Natural killer cell (primary cell): ENCODE measurements at regions of chr3 and their contacts with region 1.

Region 1: DNA sequence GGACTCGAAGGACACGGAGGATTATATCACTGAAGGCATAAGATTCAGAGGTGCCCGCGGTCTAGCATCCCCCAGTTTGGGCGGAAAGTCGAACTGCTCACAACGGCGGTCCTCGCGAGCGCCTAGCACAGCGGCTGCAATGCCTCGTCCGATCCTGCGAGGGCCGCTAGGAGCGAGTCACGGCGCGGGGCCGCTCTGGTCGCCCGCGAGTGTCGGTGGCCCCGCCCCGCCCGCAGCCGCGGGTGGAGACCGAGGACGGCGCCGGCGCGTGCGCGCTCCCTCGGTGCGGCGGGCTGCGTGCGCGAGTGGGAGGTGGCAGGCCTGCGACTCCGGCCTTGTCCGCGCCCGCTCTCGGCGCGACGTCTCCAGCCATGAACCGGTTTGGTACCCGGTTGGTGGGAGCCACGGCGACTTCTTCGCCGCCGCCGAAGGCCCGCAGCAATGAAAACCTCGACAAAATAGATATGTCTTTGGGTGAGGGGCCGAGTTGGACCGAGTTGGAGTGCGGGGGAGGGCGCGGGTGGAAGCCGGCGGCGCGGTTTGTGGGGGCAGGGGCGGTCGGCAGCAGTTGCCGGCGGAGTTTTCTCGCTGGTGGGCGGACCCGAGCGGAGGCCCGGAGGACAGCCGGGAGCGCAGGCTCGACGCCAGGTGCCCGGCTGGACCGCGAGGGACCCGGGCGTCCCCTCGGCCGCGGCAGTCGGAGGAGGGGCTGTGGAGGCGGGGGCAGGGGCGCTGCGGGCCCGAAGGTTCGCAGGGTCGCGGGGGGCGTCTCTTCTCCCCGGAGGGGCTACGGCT is at the start of gene FYTTD1:
- DNase-seq: peak; percentile 89 to 95
- ATAC-seq: peak; percentile 83 to 93 (median 89)
- H3K4me3 ChIP-seq: peak within 1 kb of the TSS; percentile 86
- H3K4me3 Mint-ChIP-seq: peak within 1 kb of the TSS; percentile 97
- H3K27ac ChIP-seq: peak within 1 kb of the TSS; percentile 91
- H3K27ac Mint-ChIP-seq: peak within 1 kb of the TSS; percentile 87 to 90
- H3K4me1 ChIP-seq: peaks cover 16% of the 10 kb centered on the region
- H3K4me1 Mint-ChIP-seq: peaks cover 41 to 48% of the 10 kb centered on the region in 2 donors
- H3K27me3 ChIP-seq: no peaks in the 10 kb centered on the region
- H3K27me3 Mint-ChIP-seq: no peaks in the 10 kb centered on the region
- CTCF ChIP-seq: peak; percentile 47
- total RNA-seq, gene FYTTD1: 58.0 to 75.6 (median 72.2) TPM

Region 2: DNA sequence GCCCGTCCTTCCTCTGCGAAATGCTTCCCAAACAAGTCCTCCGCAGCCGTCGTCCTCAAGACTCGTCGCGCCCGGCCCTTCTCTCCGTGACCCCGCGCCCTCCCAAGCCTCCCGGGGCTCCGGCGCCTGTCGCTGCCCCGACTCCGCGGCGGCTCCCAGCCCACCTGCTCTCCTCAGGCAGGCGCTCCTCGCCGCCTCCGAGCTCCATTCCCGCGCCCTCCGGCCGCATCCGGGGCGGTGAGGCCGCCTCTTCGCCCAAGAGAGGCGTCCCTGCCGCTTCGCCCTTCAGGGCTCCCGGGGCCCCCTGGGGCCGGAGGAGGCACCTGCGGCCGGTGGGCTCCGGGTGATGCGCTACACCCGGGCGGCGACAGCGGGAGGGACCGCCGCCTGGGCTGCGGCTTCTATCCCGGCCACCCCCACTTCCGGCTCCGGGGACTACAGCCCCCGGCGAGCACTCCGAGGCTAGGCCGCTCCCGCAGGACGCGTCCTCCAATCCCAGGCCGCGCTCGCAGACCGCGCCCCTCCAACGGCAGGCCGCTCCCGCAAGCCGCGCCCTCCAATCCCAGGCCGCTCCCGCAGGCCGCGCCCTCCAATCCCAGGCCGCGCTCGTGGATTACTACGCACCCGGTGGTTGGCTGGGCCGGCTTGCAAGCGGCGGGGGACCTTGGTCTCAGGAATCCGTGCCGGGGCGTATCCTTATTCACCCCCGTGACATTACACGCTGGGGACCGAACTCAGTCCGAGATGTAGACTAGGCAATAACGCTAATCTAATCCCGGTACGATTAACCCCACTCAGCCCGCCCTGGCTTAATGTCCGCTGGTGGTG is 13.1 kb before region 1 on chr3 and contains the start of gene RUBCN:
- intact Hi-C with region 1: loop called (anchors 1 kb)
- DNase-seq: peak; percentile 76 to 96
- ATAC-seq: peak; percentile 88 to 98 (median 95)
- H3K4me3 ChIP-seq: peak within 1 kb of the TSS; percentile 85
- H3K4me3 Mint-ChIP-seq: peak within 1 kb of the TSS; percentile 92
- H3K27ac ChIP-seq: peak within 1 kb of the TSS; percentile 64
- H3K27ac Mint-ChIP-seq: peak within 1 kb of the TSS; percentile 77
- H3K4me1 ChIP-seq: peaks cover 23% of the 10 kb centered on the region
- H3K4me1 Mint-ChIP-seq: peaks cover 23 to 26% of the 10 kb centered on the region in 2 donors
- H3K27me3 ChIP-seq: no peaks in the 10 kb centered on the region
- H3K27me3 Mint-ChIP-seq: no peaks in the 10 kb centered on the region
- CTCF ChIP-seq: no peak
- total RNA-seq, gene RUBCN: 51.2 to 58.5 (median 57.6) TPM

Region 3: DNA sequence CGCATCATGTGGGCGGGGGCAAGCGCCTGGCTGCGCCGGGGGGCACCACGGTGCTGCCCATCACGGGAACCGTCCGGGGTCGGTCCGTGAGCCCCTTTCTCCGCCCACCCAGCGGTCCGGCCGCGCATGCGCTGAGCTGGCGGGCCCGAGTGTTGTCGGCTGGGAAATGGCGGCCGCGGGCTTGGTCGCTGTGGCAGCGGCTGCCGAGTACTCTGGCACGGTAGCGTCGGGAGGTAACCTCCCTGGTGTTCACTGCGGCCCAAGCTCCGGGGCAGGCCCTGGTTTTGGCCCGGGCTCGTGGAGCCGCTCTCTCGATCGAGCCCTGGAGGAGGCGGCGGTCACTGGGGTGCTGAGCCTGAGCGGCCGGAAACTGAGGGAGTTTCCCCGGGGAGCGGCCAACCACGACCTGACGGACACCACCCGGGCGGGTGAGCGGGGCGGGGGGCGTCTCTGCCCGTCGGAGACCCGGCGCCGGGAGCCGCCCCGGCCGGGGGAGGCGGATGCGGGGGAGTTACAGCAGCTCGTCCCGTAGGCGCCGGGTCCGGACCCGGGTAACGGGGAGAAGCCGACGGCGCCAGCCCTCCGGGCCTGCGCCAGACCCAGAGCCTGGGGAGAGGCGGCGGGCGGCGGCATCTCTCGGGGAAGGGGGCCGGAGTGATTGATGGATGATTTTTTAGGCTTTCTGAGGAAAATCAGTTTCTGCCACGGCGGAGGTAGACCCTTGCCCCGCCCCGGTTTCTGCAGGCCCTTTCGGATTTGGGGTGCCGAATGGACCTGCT is 41.5 kb after region 1 on chr3 and contains the start of gene LRCH3:
- intact Hi-C with region 1: loop called (anchors 1 kb)
- DNase-seq: peak; percentile 83 to 90
- ATAC-seq: peak; percentile 71 to 85 (median 80)
- H3K4me3 ChIP-seq: peak within 1 kb of the TSS; percentile 94
- H3K4me3 Mint-ChIP-seq: peak within 1 kb of the TSS; percentile 93
- H3K27ac ChIP-seq: peak within 1 kb of the TSS; percentile 99
- H3K27ac Mint-ChIP-seq: peak within 1 kb of the TSS; percentile 94 to 97
- H3K4me1 ChIP-seq: peaks cover 12% of the 10 kb centered on the region
- H3K4me1 Mint-ChIP-seq: peaks cover 40 to 45% of the 10 kb centered on the region in 2 donors
- H3K27me3 ChIP-seq: no peaks in the 10 kb centered on the region
- H3K27me3 Mint-ChIP-seq: no peaks in the 10 kb centered on the region
- CTCF ChIP-seq: no peak
- total RNA-seq, gene LRCH3: 68.1 to 90.5 (median 90.3) TPM

Region 4: GRCh38 chr3:197820550-197821335 is 70.9 kb after region 1 on chr3:
- intact Hi-C with region 1: no loop called
- DNase-seq: no peak
- ATAC-seq: no peak
- H3K4me3 ChIP-seq: no peak overlapping the region
- H3K4me3 Mint-ChIP-seq: no peak overlapping the region
- H3K27ac ChIP-seq: no peak overlapping the region
- H3K27ac Mint-ChIP-seq: peak overlapping the region; percentile 60 to 82
- H3K4me1 ChIP-seq: no peaks in the 10 kb centered on the region
- H3K4me1 Mint-ChIP-seq: peaks cover 13 to 14% of the 10 kb centered on the region in 2 donors
- H3K27me3 ChIP-seq: no peaks in the 10 kb centered on the region
- H3K27me3 Mint-ChIP-seq: no peaks in the 10 kb centered on the region
- CTCF ChIP-seq: no peak